Mammary epithelial cell (primary cell): ENCODE measurements at regions of chr9 and their contacts with region 1.

Region 1: GRCh38 chr9:72827950-72828731 is 124.7 kb downstream of the ALDH1A1 start:
- DNase-seq: peak; percentile 90
- H3K4me3 ChIP-seq: no peak overlapping the region
- H3K27ac ChIP-seq: peak overlapping the region; percentile 72
- H3K4me1 ChIP-seq: peaks cover 16% of the 10 kb centered on the region
- H3K27me3 ChIP-seq: no peaks in the 10 kb centered on the region
- CTCF ChIP-seq: no peak

Region 2: DNA sequence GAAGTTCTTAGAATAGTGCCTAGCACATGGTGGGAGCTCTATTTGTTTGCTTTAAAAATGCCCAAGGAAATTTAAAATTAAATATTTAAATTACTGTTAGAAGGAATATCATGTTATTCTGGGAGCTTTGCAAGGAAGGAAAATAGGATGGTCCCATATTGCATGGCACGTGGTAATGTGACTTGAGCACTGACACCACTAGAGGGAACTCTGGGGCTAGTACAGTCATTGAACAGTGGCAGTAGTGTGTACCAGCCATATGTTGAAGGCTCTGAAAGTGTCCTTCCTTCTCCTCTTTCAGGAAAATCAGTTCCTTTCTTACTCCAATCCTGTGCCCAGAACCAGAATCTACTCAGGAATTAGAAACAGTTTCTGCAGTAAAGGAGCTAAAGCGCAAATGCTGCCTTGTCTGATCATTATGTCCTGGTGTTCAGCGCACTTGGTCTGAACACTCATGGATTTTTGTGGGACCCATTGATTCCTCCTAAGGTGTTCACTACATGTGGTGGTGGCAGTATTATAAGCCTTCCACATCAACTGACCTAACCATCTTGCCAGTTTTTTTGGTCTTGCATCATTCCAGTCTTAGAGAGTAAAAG is 624.8 kb before region 1 on chr9:
- CTCF ChIA-PET with region 1: no interaction called
- dilution Hi-C with region 1: no loop called
- in situ Hi-C with region 1: no loop called
- intact Hi-C with region 1: loop called (anchors 5 kb)
- DNase-seq: peak; percentile 40
- H3K4me3 ChIP-seq: no peak overlapping the region
- H3K27ac ChIP-seq: no peak overlapping the region
- H3K4me1 ChIP-seq: no peaks in the 10 kb centered on the region
- H3K27me3 ChIP-seq: peaks cover 5% of the 10 kb centered on the region
- CTCF ChIP-seq: peak; percentile 61 to 86

Region 3: GRCh38 chr9:72271613-72272478 is 556.3 kb before region 1 on chr9:
- CTCF ChIA-PET with region 1: no interaction called
- dilution Hi-C with region 1: loop called (anchors 25 kb)
- in situ Hi-C with region 1: loop called (anchors 5 to 10 kb)
- intact Hi-C with region 1: no loop called
- DNase-seq: peak; percentile 35
- H3K4me3 ChIP-seq: no peak overlapping the region
- H3K27ac ChIP-seq: no peak overlapping the region
- H3K4me1 ChIP-seq: peaks cover 14% of the 10 kb centered on the region
- H3K27me3 ChIP-seq: no peaks in the 10 kb centered on the region
- CTCF ChIP-seq: peak; percentile 77 to 86

Region 4: DNA sequence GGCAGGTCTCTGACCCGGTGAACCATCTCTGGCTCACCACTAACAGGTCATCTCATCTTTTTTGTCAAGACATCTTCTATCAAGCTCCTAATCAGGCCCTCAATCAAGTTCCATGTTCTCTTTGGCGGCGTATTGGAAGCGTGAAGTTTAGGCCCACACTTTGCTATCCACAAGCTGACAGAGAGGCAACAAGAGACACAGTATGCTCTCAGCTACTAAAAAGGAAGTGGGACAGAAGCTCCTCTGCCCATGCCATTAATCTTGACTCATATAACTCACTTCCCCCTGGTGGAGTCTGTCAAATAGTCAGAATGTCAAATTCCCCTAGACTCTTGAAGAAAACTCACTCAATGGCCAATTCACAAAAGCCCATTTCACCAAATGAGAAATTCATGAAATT is 384.3 kb before region 1 on chr9:
- CTCF ChIA-PET with region 1: no interaction called
- dilution Hi-C with region 1: no loop called
- in situ Hi-C with region 1: no loop called
- intact Hi-C with region 1: loop called (anchors 10 kb)
- DNase-seq: peak; percentile 37
- H3K4me3 ChIP-seq: no peak overlapping the region
- H3K27ac ChIP-seq: no peak overlapping the region
- H3K4me1 ChIP-seq: peaks cover 41% of the 10 kb centered on the region
- H3K27me3 ChIP-seq: no peaks in the 10 kb centered on the region
- CTCF ChIP-seq: no peak

Region 5: DNA sequence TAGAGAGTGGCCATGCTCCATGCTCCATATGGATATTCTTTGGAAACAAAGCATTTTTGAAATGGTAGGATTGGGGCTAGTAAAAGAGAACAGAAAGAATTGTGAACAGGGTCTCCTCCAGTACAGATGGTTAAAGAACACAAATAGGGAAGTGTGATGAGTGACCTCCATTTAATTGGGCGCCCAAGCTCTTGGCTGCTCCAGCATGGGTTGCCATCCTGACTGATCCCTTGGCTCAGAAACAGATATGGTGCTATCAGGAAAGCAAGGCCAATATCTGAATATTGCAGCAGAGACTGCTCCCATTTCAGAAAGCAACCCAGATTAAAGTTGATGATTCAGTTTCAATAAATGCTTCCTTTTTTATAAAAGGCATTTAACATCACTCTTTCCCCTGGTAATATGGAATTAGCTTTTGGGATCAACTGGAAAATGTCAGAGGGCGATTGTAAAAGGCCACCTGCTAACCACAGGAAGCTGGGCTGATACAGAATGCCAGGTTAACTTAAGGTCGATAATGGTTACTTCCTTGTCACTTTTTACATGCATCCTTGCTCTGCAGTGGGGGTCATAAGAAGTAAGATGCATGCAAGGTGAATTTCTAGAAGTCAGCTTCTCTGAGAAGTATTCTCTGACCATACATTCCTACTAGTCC is 253.9 kb before region 1 on chr9:
- CTCF ChIA-PET with region 1: no interaction called
- dilution Hi-C with region 1: no loop called
- in situ Hi-C with region 1: no loop called
- intact Hi-C with region 1: no loop called
- DNase-seq: no peak
- H3K4me3 ChIP-seq: no peak overlapping the region
- H3K27ac ChIP-seq: no peak overlapping the region
- H3K4me1 ChIP-seq: peaks cover 37% of the 10 kb centered on the region
- H3K27me3 ChIP-seq: no peaks in the 10 kb centered on the region
- CTCF ChIP-seq: no peak

Region 6: DNA sequence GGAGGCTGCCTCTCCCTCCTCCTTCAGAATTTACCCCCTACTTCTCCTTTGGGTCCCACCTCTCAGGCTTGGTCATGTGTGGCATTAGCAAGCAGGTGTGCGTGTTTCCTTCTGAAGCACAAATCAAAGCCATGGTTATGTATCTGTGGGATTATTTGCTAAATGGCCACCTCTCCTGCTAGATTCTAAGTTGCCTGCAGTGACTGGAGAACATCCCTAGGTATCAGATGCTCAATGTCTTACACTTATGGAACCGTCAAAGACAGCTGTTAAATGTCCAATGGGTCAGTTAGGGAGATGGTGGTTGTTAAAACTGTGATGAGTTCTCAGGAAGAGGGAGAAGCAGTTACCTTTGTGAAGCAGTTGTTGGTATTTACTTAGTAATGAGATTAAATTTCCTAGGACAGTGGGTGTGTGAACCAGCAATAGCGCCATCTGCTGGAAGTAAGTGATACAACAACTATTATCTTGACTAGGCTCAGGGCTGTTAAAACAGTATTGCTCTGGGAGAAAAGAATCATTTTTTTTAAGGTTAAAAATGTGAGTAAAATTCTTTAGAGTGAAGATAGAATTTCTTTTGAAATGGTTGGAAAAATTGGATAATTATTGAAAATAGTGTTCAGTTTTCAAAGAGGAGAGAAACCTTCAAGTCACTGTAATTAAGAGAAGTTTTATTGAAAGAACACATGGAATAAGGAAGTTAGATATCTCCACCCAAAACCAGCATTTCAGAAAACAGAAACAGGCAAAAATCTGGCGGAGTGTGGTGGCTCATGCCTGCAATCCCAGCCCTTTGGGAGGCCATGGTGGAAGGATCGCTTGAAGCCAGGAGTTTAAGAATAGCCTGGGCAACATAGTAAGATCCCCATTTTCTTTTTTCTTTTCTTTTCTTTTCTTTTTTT is 235.4 kb before region 1 on chr9:
- CTCF ChIA-PET with region 1: no interaction called
- dilution Hi-C with region 1: no loop called
- in situ Hi-C with region 1: no loop called
- intact Hi-C with region 1: loop called (anchors 2 kb)
- DNase-seq: peak; percentile 46
- H3K4me3 ChIP-seq: no peak overlapping the region
- H3K27ac ChIP-seq: no peak overlapping the region
- H3K4me1 ChIP-seq: no peaks in the 10 kb centered on the region
- H3K27me3 ChIP-seq: no peaks in the 10 kb centered on the region
- CTCF ChIP-seq: peak; percentile 66 to 72

Region 7: GRCh38 chr9:72734631-72735030 is 93.5 kb before region 1 on chr9:
- CTCF ChIA-PET with region 1: no interaction called
- dilution Hi-C with region 1: no loop called
- in situ Hi-C with region 1: no loop called
- intact Hi-C with region 1: no loop called
- DNase-seq: no peak
- H3K4me3 ChIP-seq: no peak overlapping the region
- H3K27ac ChIP-seq: no peak overlapping the region
- H3K4me1 ChIP-seq: no peaks in the 10 kb centered on the region
- H3K27me3 ChIP-seq: no peaks in the 10 kb centered on the region
- CTCF ChIP-seq: no peak

Region 8: GRCh38 chr9:72753266-72753893 is 74.8 kb before region 1 on chr9:
- CTCF ChIA-PET with region 1: no interaction called
- dilution Hi-C with region 1: no loop called
- in situ Hi-C with region 1: no loop called
- intact Hi-C with region 1: loop called (anchors 2 kb)
- DNase-seq: no peak
- H3K4me3 ChIP-seq: no peak overlapping the region
- H3K27ac ChIP-seq: no peak overlapping the region
- H3K4me1 ChIP-seq: no peaks in the 10 kb centered on the region
- H3K27me3 ChIP-seq: peaks cover 2% of the 10 kb centered on the region
- CTCF ChIP-seq: peak; percentile 48 to 62

Region 9: GRCh38 chr9:72763022-72763421 is 65.1 kb before region 1 on chr9:
- CTCF ChIA-PET with region 1: no interaction called
- dilution Hi-C with region 1: no loop called
- in situ Hi-C with region 1: loop called in 1 of 2 experiments (anchors 10 kb)
- intact Hi-C with region 1: no loop called
- DNase-seq: no peak
- H3K4me3 ChIP-seq: no peak overlapping the region
- H3K27ac ChIP-seq: no peak overlapping the region
- H3K4me1 ChIP-seq: no peaks in the 10 kb centered on the region
- H3K27me3 ChIP-seq: peaks cover 3% of the 10 kb centered on the region
- CTCF ChIP-seq: no peak